Transverse colon (tissue), 4 donors: ENCODE measurements at regions of chr1 and their contacts with region 1.

Region 1: GRCh38 chr1:10639775-10640578 is 156.5 kb downstream of the CASZ1 start:
- DNase-seq: no peak
- H3K4me3 ChIP-seq: no peak overlapping the region
- H3K27ac ChIP-seq: peak overlapping the region; percentile 51 to 79 (median 60)
- H3K4me1 ChIP-seq: peaks cover 12 to 36% (median 17%) of the 10 kb centered on the region in 4 donors
- H3K27me3 ChIP-seq: no peaks in the 10 kb centered on the region
- CTCF ChIP-seq: no peak
- EP300 ChIP-seq: no peak
- POLR2A ChIP-seq: no peak

Region 2: GRCh38 chr1:10686404-10687040 is 46.5 kb after region 1 on chr1:
- in situ Hi-C with region 1: no loop called
- intact Hi-C with region 1: loop called (anchors 5 kb)
- DNase-seq: peak; percentile 31
- H3K4me3 ChIP-seq: no peak overlapping the region
- H3K27ac ChIP-seq: peak overlapping the region; percentile 79 to 95 (median 94)
- H3K4me1 ChIP-seq: peaks cover 65 to 99% (median 79%) of the 10 kb centered on the region in 4 donors
- H3K27me3 ChIP-seq: no peaks in the 10 kb centered on the region
- CTCF ChIP-seq: peak in 1 of 5 experiments; percentile 36
- EP300 ChIP-seq: no peak
- POLR2A ChIP-seq: no peak